H1 (cell line): ENCODE measurements at regions of chr1 and their contacts with region 1.

Region 1: DNA sequence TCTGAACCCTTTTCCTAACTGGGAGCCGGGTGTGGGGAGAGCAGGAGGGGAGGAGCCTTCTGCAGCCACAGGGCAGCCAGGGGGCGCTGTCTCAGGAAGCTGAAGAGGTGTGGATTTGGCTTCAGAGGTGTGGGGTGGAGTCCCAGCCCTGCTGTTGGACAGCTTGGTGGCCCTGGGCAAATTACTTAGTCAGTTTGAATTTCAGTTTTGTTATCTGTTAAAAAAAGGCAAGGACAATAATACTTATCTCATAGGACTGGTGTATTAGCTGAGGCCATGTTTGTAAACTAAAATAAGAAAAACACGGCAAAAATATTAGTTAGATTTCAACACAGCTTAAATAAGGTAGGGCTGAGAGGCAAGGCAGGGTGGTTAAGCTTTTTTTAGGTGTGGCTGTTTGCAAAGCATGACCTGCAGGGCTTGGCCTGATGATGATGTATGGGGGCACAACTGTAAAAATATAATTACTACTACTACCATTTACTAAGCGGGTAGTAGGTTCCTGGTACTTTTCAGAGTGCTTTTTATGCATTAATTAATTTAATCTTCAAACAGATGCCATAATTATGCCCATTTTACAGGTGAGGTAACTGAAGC is 111.8 kb downstream of the PLXNA2 start:
- DNase-seq: peak; percentile 54 to 92
- H3K4me3 ChIP-seq: peak overlapping the region in 1 of 4 experiments; percentile 45; a peak in 3 of 8 replicates
- H3K27ac ChIP-seq: no peak overlapping the region
- H3K4me1 ChIP-seq: peaks cover 11 to 20% (median 15%) of the 10 kb centered on the region in 4 experiments
- H3K27me3 ChIP-seq: peaks cover 0 to 10% (median 4%) of the 10 kb centered on the region in 4 experiments; a peak in 2 of 7 replicates
- CTCF ChIP-seq: peak; percentile 85 to 90 (median 90)
- EP300 ChIP-seq: no peak
- POLR2A ChIP-seq: no peak
- RAD21 ChIP-seq: peak; percentile 63 to 69

Region 2: DNA sequence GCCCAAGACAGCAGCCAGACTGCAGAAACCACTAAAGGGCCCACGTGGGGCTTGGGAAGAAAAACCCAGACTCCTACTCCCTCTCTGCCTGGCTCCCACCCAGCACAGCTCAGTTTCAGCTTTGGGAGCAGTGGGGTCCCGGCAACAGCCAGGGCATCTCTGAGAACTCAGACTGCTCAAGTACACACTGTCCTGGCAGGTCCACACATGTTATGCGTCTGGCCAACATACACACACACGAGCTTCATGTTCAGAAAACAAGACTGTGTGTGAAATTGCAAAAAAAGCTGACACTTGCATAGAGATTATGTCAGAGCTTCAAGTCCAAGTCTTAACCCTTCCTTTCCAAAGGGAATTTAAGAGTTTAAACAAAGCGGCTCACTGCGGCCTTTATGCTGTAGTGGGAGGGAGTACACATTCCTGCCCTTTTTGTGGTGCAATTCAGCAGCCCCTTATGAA is 84.9 kb before region 1 on chr1:
- CTCF ChIA-PET with region 1: interaction called, 10 read pairs
- POLR2A ChIA-PET with region 1: no interaction called
- DNase-seq: no peak
- H3K4me3 ChIP-seq: no peak overlapping the region
- H3K27ac ChIP-seq: no peak overlapping the region
- H3K4me1 ChIP-seq: peaks cover 0 to 5% (median 0%) of the 10 kb centered on the region in 4 experiments; a peak in 1 of 7 replicates
- H3K27me3 ChIP-seq: no peaks in the 10 kb centered on the region
- CTCF ChIP-seq: no peak
- EP300 ChIP-seq: no peak
- POLR2A ChIP-seq: no peak
- RAD21 ChIP-seq: no peak

Region 3: GRCh38 chr1:208110296-208110695 is 22.1 kb before region 1 on chr1:
- CTCF ChIA-PET with region 1: interaction called, 17 read pairs
- POLR2A ChIA-PET with region 1: no interaction called
- DNase-seq: no peak
- H3K4me3 ChIP-seq: no peak overlapping the region
- H3K27ac ChIP-seq: no peak overlapping the region
- H3K4me1 ChIP-seq: peaks cover 0 to 4% (median 0%) of the 10 kb centered on the region in 4 experiments; a peak in 3 of 7 replicates
- H3K27me3 ChIP-seq: no peaks in the 10 kb centered on the region
- CTCF ChIP-seq: no peak
- EP300 ChIP-seq: no peak
- POLR2A ChIP-seq: no peak
- RAD21 ChIP-seq: no peak

Region 4: GRCh38 chr1:208159555-208160258 is 27.3 kb after region 1 on chr1:
- CTCF ChIA-PET with region 1: interaction called, 29 read pairs
- POLR2A ChIA-PET with region 1: interaction called, 3 read pairs
- DNase-seq: no peak
- H3K4me3 ChIP-seq: no peak overlapping the region
- H3K27ac ChIP-seq: no peak overlapping the region
- H3K4me1 ChIP-seq: peaks cover 4 to 21% (median 16%) of the 10 kb centered on the region in 4 experiments
- H3K27me3 ChIP-seq: 0 out of 7 replicates have a peak, but pooled peaks cover 0 to 4% (median 0%) of the 10 kb centered on the region in 4 experiments
- CTCF ChIP-seq: no peak
- EP300 ChIP-seq: no peak
- POLR2A ChIP-seq: no peak
- RAD21 ChIP-seq: no peak

Region 5: GRCh38 chr1:208223136-208223535 is 90.8 kb after region 1 on chr1:
- CTCF ChIA-PET with region 1: interaction called, 13 read pairs
- POLR2A ChIA-PET with region 1: no interaction called
- DNase-seq: no peak
- H3K4me3 ChIP-seq: no peak overlapping the region
- H3K27ac ChIP-seq: no peak overlapping the region
- H3K4me1 ChIP-seq: peaks cover 0 to 8% (median 3%) of the 10 kb centered on the region in 4 experiments; a peak in 5 of 7 replicates
- H3K27me3 ChIP-seq: no peaks in the 10 kb centered on the region
- CTCF ChIP-seq: no peak
- EP300 ChIP-seq: no peak
- POLR2A ChIP-seq: no peak
- RAD21 ChIP-seq: no peak

Region 6: GRCh38 chr1:208245185-208245705 is 112.9 kb after region 1 on chr1:
- CTCF ChIA-PET with region 1: interaction called, 44 read pairs
- POLR2A ChIA-PET with region 1: no interaction called
- DNase-seq: peak in 1 of 2 experiments; percentile 87
- H3K4me3 ChIP-seq: peak overlapping the region in 3 of 4 experiments; percentile 43 to 70 (median 44); a peak in 5 of 8 replicates
- H3K27ac ChIP-seq: no peak overlapping the region
- H3K4me1 ChIP-seq: peaks cover 0 to 11% (median 5%) of the 10 kb centered on the region in 4 experiments; a peak in 5 of 7 replicates
- H3K27me3 ChIP-seq: peaks cover 16 to 44% (median 36%) of the 10 kb centered on the region in 4 experiments
- CTCF ChIP-seq: peak; percentile 21 to 78 (median 76)
- EP300 ChIP-seq: no peak
- POLR2A ChIP-seq: no peak
- RAD21 ChIP-seq: peak; percentile 78 to 82

Region 7: DNA sequence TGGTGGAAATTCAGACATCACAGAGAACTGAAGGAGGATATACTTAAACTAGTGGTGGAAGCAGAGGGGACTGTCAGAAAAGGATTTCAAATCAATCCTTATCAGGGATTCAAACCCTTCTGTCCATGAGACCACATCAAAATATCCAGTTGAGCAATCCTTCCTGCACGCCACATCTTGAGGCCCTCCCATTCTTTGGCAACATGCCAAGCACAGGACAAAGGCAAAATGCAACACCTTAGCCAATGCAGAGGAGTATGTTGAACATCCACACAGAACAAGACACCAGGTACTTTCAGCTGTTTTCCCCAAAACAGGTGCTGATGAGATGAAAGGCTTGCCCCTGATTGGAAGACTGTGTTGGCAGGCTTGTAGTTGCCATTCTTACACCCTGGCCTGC is 193.7 kb after region 1 on chr1:
- CTCF ChIA-PET with region 1: no interaction called
- POLR2A ChIA-PET with region 1: no interaction called
- DNase-seq: no peak
- H3K4me3 ChIP-seq: no peak overlapping the region
- H3K27ac ChIP-seq: no peak overlapping the region
- H3K4me1 ChIP-seq: peaks cover 0 to 3% (median 0%) of the 10 kb centered on the region in 4 experiments; a peak in 1 of 7 replicates
- H3K27me3 ChIP-seq: no peaks in the 10 kb centered on the region
- CTCF ChIP-seq: no peak
- EP300 ChIP-seq: no peak
- POLR2A ChIP-seq: no peak
- RAD21 ChIP-seq: no peak